Sigmoid colon (tissue), 7 donors: ENCODE measurements at regions of chr3 and their contacts with region 1.

Region 1: GRCh38 chr3:142279965-142280590 is 54.7 kb upstream of the GK5 start:
- DNase-seq: peak; percentile 71
- H3K4me3 ChIP-seq: no peak overlapping the region
- H3K27ac ChIP-seq: no peak overlapping the region
- H3K4me1 ChIP-seq: peaks cover 0 to 12% (median 4%) of the 10 kb centered on the region in 4 donors
- H3K27me3 ChIP-seq: no peaks in the 10 kb centered on the region
- CTCF ChIP-seq: peak; percentile 62 to 65 (median 64)
- EP300 ChIP-seq: no peak
- POLR2A ChIP-seq: no peak

Region 2: GRCh38 chr3:141959921-141960554 is 320.0 kb before region 1 on chr3:
- intact Hi-C with region 1: loop called (anchors 2 kb)
- DNase-seq: no peak
- H3K4me3 ChIP-seq: no peak overlapping the region
- H3K27ac ChIP-seq: peak overlapping the region in 3 of 4 donors; percentile 32 to 64 (median 51)
- H3K4me1 ChIP-seq: peaks cover 0 to 22% (median 14%) of the 10 kb centered on the region in 4 donors
- H3K27me3 ChIP-seq: no peaks in the 10 kb centered on the region
- CTCF ChIP-seq: no peak
- EP300 ChIP-seq: no peak
- POLR2A ChIP-seq: no peak

Region 3: GRCh38 chr3:142127941-142128658 is 152.0 kb before region 1 on chr3:
- intact Hi-C with region 1: loop called (anchors 2 kb)
- DNase-seq: no peak
- H3K4me3 ChIP-seq: no peak overlapping the region
- H3K27ac ChIP-seq: no peak overlapping the region
- H3K4me1 ChIP-seq: no peaks in the 10 kb centered on the region
- H3K27me3 ChIP-seq: no peaks in the 10 kb centered on the region
- CTCF ChIP-seq: no peak
- EP300 ChIP-seq: no peak
- POLR2A ChIP-seq: no peak

Region 4: GRCh38 chr3:142180761-142181362 is 99.2 kb before region 1 on chr3:
- intact Hi-C with region 1: loop called (anchors 2 kb)
- DNase-seq: no peak
- H3K4me3 ChIP-seq: no peak overlapping the region
- H3K27ac ChIP-seq: no peak overlapping the region
- H3K4me1 ChIP-seq: no peaks in the 10 kb centered on the region
- H3K27me3 ChIP-seq: no peaks in the 10 kb centered on the region
- CTCF ChIP-seq: peak; percentile 10 to 58 (median 35)
- EP300 ChIP-seq: no peak
- POLR2A ChIP-seq: no peak

Region 5: GRCh38 chr3:142226484-142226883 is 53.6 kb before region 1 on chr3:
- intact Hi-C with region 1: loop called (anchors 5 kb)
- DNase-seq: no peak
- H3K4me3 ChIP-seq: no peak overlapping the region
- H3K27ac ChIP-seq: no peak overlapping the region
- H3K4me1 ChIP-seq: peaks cover 0 to 31% (median 25%) of the 10 kb centered on the region in 4 donors
- H3K27me3 ChIP-seq: no peaks in the 10 kb centered on the region
- CTCF ChIP-seq: no peak
- EP300 ChIP-seq: no peak
- POLR2A ChIP-seq: no peak

Region 6: GRCh38 chr3:142355692-142356091 is 75.6 kb after region 1 on chr3:
- intact Hi-C with region 1: no loop called
- DNase-seq: no peak
- H3K4me3 ChIP-seq: no peak overlapping the region
- H3K27ac ChIP-seq: no peak overlapping the region
- H3K4me1 ChIP-seq: no peaks in the 10 kb centered on the region
- H3K27me3 ChIP-seq: no peaks in the 10 kb centered on the region
- CTCF ChIP-seq: no peak
- EP300 ChIP-seq: no peak
- POLR2A ChIP-seq: no peak